ENCODE measurements at regions of chr19 and their contacts with region 1.

Region 1: GRCh38 chr19:40348125-40348913 is at the starts of genes C19orf47 and PLD3:
- DNase-seq: peak; percentile 99
- H3K4me3 ChIP-seq: peak within 1 kb of the TSS; percentile 78 to 93 (median 86)
- H3K27ac ChIP-seq: peak within 1 kb of the TSS; percentile 74
- H3K4me1 ChIP-seq: peaks cover 9% of the 10 kb centered on the region
- H3K27me3 ChIP-seq: no peaks in the 10 kb centered on the region
- CTCF ChIP-seq: no peak
- total RNA-seq, gene C19orf47: 19.9 to 20.3 TPM
- total RNA-seq, gene PLD3: 146 to 293 TPM

Region 2: GRCh38 chr19:40284501-40285352 is 63.6 kb before region 1 on chr19 and contains the start of gene AKT2:
- CTCF ChIA-PET with region 1: no interaction called
- dilution Hi-C with region 1: no loop called
- in situ Hi-C with region 1: no loop called
- intact Hi-C with region 1: loop called (anchors 5 kb)
- DNase-seq: peak; percentile 9
- H3K4me3 ChIP-seq: peak within 1 kb of the TSS; percentile 60 to 93 (median 89)
- H3K27ac ChIP-seq: peak within 1 kb of the TSS; percentile 76
- H3K4me1 ChIP-seq: peaks cover 30% of the 10 kb centered on the region
- H3K27me3 ChIP-seq: no peaks in the 10 kb centered on the region
- CTCF ChIP-seq: no peak
- total RNA-seq, gene AKT2: 87.5 to 124 TPM

Region 3: DNA sequence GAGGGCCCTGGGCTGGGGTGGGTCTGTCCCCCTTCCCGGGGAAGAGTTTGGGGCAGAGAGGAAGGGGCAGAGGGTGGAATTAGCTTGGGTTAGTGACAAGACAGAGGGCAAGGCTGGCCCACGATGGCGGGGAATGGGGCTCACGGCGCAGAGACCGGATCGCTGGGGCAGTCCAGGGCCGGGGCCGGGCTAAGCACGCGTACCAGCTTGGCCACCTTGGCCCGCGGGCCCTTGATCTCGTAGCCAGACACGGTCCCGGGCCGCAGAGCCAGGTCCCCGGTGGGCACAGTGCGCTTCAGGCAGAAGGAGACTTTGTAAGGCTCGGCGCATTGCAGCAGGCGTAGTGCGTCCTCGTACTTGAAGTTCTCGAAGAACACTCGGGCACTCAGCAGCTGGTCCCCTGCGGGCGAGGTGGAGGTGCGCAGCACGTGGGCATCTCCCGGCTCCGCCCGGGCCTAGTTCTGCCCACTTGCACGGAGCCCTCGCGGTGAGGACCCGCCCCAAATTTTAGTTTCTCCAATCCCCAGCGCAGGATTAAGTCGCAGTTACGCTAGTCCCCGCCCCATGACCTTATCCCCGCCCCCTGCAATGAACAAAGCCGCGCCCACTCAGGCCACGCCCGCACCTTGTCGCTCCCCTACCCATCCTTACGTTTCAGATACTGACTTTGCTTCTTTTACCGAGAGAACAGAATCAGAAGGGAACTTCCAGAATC is 50.3 kb after region 1 on chr19:
- CTCF ChIA-PET with region 1: no interaction called
- dilution Hi-C with region 1: loop called (anchors 5 kb)
- in situ Hi-C with region 1: no loop called
- intact Hi-C with region 1: no loop called
- DNase-seq: peak; percentile 25
- H3K4me3 ChIP-seq: no peak overlapping the region
- H3K27ac ChIP-seq: no peak overlapping the region
- H3K4me1 ChIP-seq: peaks cover 11% of the 10 kb centered on the region
- H3K27me3 ChIP-seq: no peaks in the 10 kb centered on the region
- CTCF ChIP-seq: no peak

Region 4: DNA sequence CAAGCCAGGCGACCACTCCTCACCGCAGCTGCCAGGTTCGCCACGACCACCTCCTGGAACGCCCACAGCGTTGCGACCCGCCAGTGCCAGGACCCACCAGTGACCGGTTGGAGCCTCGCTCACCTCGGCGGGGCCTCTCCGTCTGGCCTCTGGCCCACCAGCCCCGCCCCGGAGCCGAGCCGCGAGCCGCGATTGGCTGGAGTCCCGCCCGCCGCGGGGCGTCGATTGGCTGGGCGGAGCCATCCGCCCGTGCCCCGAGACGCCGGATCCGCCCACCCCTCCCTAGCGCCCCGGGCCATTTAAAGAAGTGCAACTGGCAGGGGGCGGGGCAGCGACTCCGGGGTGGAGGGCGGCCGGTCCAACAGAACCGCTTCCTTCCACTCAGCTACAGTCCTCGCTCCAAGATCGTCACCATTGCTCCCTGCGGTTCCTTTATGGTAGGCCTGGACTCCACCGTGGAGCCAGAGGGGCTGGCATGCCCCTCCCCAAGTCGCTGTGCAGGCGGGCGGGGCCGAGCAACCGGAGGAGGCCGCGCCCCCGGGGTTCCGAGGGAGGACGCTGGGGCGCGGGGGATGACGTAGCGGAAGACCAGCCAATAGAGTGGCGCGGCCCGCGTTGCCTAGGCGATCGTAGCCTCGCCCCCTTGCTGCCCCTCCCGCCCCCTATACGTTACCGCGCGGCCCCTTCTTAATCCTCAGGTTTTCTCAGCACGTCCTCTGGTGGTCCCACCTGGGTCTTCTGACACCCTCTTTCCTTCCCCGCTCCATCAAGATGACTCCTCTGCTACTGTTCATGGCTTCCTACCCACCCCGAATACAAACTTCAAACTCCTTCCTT is 96.1 kb after region 1 on chr19 and contains the start of gene SERTAD3:
- CTCF ChIA-PET with region 1: no interaction called
- dilution Hi-C with region 1: loop called (anchors 5 kb)
- in situ Hi-C with region 1: no loop called
- intact Hi-C with region 1: loop called (anchors 2 kb)
- DNase-seq: peak; percentile 94
- H3K4me3 ChIP-seq: peak within 1 kb of the TSS; percentile 92 to 100 (median 95)
- H3K27ac ChIP-seq: peak within 1 kb of the TSS; percentile 95
- H3K4me1 ChIP-seq: peaks cover 35% of the 10 kb centered on the region
- H3K27me3 ChIP-seq: no peaks in the 10 kb centered on the region
- CTCF ChIP-seq: peak in 1 of 2 donors; percentile 7
- total RNA-seq, gene SERTAD3: 34.3 to 35.8 TPM

Region 5: DNA sequence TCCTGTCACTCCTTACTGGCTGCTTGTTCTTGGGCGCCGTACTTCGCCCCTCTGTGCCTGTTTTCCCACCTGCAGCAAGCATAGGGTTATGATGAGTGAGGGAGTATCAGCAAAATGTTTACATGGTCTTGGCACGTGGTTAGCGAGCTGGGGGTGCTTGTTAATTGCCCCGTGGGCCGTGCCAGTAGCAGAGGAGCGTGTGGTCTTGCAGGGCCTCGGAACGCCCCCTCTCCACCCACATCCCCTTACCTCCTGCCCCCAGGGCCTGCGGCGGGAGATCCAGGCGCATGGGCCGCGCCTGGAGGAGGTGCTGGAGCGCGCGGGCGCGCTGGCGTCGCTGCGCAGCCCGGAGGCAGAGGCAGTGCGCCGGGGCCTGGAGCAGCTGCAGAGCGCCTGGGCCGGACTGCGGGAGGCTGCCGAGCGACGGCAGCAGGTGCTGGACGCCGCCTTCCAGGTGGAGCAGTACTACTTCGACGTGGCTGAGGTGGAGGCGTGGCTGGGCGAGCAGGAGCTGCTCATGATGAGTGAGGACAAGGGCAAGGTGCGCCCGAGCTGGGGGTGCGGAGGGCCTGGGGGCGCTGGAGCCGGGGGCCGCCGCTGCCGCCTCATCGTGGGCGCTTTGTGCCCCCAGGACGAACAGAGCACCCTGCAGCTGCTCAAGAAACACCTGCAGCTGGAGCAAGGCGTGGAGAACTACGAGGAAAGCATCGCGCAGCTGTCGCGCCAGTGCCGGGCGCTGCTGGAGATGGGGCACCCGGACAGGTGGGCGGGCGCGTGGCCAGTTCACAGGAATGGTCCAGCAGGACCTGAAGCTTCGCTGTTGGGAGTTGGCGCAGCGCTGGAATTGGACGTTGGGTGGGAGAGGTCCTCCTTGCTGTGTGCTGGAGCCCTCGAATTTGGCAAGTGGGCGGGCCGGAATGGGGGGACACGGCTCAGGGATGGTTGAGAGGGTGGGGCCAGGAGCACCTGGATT is 205.9 kb after region 1 on chr19:
- CTCF ChIA-PET with region 1: no interaction called
- dilution Hi-C with region 1: loop called (anchors 5 kb)
- in situ Hi-C with region 1: no loop called
- intact Hi-C with region 1: no loop called
- DNase-seq: peak; percentile 12
- H3K4me3 ChIP-seq: no peak overlapping the region
- H3K27ac ChIP-seq: no peak overlapping the region
- H3K4me1 ChIP-seq: no peaks in the 10 kb centered on the region
- H3K27me3 ChIP-seq: peaks cover 2% of the 10 kb centered on the region
- CTCF ChIP-seq: no peak

Region 6: GRCh38 chr19:40614622-40615411 is 266.5 kb after region 1 on chr19:
- CTCF ChIA-PET with region 1: no interaction called
- dilution Hi-C with region 1: loop called (anchors 5 kb)
- in situ Hi-C with region 1: no loop called
- intact Hi-C with region 1: no loop called
- DNase-seq: peak; percentile 95
- H3K4me3 ChIP-seq: peak overlapping the region; percentile 18 to 53 (median 51)
- H3K27ac ChIP-seq: peak overlapping the region; percentile 48
- H3K4me1 ChIP-seq: peaks cover 50% of the 10 kb centered on the region
- H3K27me3 ChIP-seq: no peaks in the 10 kb centered on the region
- CTCF ChIP-seq: no peak